ENCODE measurements at regions of chr5 and their contacts with region 1.

Region 1: DNA sequence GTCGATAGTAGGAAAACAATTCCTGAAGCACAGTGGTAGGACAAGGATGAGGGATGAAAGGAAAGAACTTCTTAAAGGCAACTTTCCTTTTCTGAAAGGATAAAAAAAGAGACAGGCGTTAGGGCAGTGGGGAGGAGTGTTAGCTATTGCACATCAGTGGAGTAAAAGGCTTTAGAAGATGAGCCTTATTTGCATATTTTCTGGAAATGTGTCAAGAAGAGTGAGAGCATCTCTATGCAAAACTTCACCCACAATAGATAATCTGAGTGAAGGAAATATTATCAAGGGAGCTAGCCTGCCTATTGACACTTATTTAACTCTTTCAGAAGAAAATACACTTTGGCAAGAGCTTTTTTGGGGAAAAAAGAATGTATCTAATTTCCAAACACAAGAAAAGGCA is 151.6 kb downstream of the MACIR start:
- DNase-seq: no peak
- H3K4me3 ChIP-seq: no peak overlapping the region
- H3K27ac ChIP-seq: no peak overlapping the region
- H3K4me1 ChIP-seq: peaks cover 19% of the 10 kb centered on the region
- H3K27me3 ChIP-seq: no peaks in the 10 kb centered on the region
- CTCF ChIP-seq: no peak

Region 2: DNA sequence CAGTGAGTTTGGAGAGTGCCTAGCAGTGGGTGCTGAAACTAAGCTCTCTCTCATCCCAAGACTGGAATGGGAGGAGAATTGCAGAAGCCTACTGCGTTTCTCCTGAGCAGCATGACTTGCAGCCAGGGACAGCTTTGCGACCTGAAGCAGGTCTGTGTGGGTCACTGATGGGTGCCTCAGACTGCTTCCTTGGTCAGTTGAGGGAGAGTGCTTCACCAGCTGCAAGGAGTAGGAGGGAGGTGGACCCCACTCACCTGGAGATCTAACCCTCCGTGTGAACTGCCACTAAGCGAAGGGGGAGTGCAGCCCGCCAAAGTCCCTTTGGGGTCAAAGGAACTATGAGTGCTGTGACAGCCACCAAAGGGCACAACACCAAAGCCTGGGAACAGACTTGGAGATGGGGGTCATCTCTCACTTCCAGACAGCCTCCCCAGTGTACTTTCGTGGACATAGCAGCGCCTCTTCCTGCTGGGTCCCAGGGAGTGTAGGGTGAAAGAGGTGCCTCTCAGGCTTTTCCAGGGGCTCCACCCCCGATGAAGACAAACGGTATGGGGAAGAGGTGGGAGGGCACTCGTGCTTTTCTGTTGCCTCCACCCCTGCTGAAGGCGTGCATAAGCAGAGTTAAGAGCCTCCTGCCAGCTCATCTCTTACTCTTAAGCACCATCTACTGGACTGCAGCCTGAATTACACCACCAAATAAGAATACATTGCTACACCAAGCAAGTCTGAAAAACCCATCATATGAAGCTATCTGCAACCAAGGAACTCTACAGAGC is 185.9 kb before region 1 on chr5:
- CTCF ChIA-PET with region 1: no interaction called
- POLR2A ChIA-PET with region 1: interaction called, 10 read pairs
- intact Hi-C with region 1: no loop called
- DNase-seq: peak; percentile 27 to 54
- H3K4me3 ChIP-seq: no peak overlapping the region
- H3K27ac ChIP-seq: no peak overlapping the region
- H3K4me1 ChIP-seq: no peaks in the 10 kb centered on the region
- H3K27me3 ChIP-seq: no peaks in the 10 kb centered on the region
- CTCF ChIP-seq: peak; percentile 83

Region 3: DNA sequence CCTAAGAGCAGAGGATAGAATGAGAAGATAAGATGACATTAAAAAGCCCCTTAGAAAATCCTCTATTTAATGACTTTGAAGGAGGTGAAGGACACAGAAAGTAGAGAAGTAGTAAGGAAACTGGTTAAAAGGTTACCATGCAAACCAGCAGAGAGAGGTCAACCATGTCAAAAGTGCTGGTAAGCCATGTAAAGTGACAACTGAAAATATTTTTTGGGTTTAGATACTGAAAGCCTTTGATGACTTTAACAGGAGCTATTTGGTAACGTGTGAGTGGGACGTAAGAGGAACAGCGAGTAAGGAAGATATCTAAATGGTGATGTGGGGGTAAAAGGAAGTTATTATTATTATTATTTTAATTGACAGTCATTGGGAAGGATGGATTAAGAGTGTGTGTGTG is 94.7 kb before region 1 on chr5:
- CTCF ChIA-PET with region 1: no interaction called
- POLR2A ChIA-PET with region 1: interaction called, 13 read pairs
- intact Hi-C with region 1: no loop called
- DNase-seq: no peak
- H3K4me3 ChIP-seq: no peak overlapping the region
- H3K27ac ChIP-seq: no peak overlapping the region
- H3K4me1 ChIP-seq: no peaks in the 10 kb centered on the region
- H3K27me3 ChIP-seq: no peaks in the 10 kb centered on the region
- CTCF ChIP-seq: no peak

Region 4: GRCh38 chr5:103461243-103461642 is 51.1 kb after region 1 on chr5:
- CTCF ChIA-PET with region 1: no interaction called
- POLR2A ChIA-PET with region 1: no interaction called
- intact Hi-C with region 1: loop called (anchors 1 kb)
- DNase-seq: peak; percentile 22 to 65
- H3K4me3 ChIP-seq: no peak overlapping the region
- H3K27ac ChIP-seq: 0 out of 2 replicates have a peak overlapping the region, but pooled peaks have one; percentile 27
- H3K4me1 ChIP-seq: peaks cover 16% of the 10 kb centered on the region
- H3K27me3 ChIP-seq: no peaks in the 10 kb centered on the region
- CTCF ChIP-seq: no peak

Measured in PC-9 (cell line).